CD8-positive, alpha-beta T cell (primary cell): ENCODE measurements at regions of chr4 and their contacts with region 1.

Region 1: DNA sequence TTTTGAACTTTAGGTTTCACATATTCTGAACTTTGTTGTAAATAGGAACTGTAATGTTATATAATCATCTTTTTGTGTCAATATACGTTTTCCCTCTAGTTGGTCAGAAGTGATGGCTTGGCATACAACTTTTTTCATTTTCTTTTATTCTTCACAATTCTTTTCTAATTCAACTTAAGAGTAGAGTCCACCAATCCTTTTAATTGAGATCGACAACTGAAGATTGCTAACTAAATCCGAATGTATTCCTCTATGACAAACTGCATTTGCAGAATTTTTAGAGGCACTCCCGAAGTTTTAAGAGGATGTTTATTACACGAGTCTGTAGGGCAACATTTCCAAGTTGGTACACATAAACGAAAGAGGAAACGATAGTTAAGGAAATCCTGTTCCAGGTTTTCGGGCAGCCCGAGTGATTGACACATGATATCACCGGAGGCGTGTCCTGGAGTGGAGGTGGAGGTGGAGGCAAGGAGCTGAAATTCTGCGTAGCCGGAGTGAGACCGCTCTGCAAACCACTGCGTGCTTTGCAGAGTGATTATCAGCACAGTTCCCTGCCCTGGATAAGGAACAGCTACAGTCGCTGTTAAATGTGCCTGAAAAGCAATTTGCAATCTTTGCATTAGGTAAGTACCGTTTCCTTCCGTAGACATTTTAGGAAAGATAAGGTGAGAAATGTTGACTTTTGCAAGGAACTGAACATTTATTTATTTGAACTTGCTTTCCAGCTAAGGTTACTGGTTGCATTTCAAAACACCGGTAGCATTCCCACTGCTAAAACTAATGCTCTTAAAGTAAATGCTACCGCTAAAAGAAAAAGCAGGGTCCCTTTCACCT is at the start of gene SPRY1:
- DNase-seq: peak; percentile 40 to 88 (median 75)
- ATAC-seq: peak; percentile 58
- H3K4me3 ChIP-seq: peak within 1 kb of the TSS; percentile 54 to 66
- H3K4me3 Mint-ChIP-seq: peak within 1 kb of the TSS; percentile 83
- H3K27ac ChIP-seq: peak within 1 kb of the TSS; percentile 21 to 24
- H3K27ac Mint-ChIP-seq: peak within 1 kb of the TSS; percentile 85
- H3K4me1 ChIP-seq: peaks cover 9% of the 10 kb centered on the region
- H3K4me1 Mint-ChIP-seq: peaks cover 24% of the 10 kb centered on the region
- H3K27me3 ChIP-seq: peaks cover 0 to 3% of the 10 kb centered on the region in 2 experiments
- H3K27me3 Mint-ChIP-seq: no peaks in the 10 kb centered on the region
- CTCF ChIP-seq: no peak
- total RNA-seq, gene SPRY1: 65.8 to 66.1 TPM

Region 2: DNA sequence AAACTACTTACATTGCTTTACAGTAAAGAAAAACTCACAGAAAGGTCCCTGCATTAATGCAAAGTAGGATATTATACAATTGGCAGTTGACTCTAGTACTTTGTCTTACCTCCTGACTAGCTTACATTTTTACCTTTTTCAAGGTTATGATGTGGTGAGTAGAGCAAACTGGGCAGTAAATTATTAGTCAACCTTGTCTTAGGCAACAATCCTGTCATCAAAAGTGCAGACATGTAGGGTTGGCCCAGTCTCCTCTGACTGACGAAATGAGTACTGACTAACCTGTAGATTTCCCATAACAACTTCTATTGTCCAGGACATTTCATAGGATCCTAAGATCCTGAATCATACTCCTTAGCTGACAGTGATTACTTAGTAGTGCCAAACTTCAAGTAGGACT is 332.1 kb before region 1 on chr4:
- CTCF ChIA-PET with region 1: no interaction called
- POLR2A ChIA-PET with region 1: no interaction called
- intact Hi-C with region 1: no loop called
- DNase-seq: no peak
- ATAC-seq: no peak
- H3K4me3 ChIP-seq: no peak overlapping the region
- H3K4me3 Mint-ChIP-seq: no peak overlapping the region
- H3K27ac ChIP-seq: no peak overlapping the region
- H3K27ac Mint-ChIP-seq: no peak overlapping the region
- H3K4me1 ChIP-seq: no peaks in the 10 kb centered on the region
- H3K4me1 Mint-ChIP-seq: no peaks in the 10 kb centered on the region
- H3K27me3 ChIP-seq: no peaks in the 10 kb centered on the region
- H3K27me3 Mint-ChIP-seq: no peaks in the 10 kb centered on the region
- CTCF ChIP-seq: no peak

Region 3: DNA sequence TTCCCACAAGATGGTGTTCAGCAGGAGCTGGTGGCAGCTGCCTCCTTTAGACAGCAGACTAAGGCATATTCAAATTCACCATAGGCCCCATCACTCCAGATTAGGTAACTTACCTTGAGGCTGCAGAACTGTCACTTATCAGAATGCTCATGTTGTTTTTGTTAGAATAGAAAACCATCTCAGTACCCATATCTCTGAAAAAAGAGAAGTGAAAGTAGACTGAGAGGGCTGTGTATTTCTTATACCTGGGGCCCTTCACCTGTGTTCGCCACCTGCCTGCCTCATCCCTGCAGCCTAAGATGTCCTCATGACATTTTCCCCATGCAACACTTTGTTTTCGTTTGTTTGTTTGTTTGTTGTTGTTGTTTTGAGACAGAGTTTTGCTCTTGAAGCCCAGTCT is 32.8 kb before region 1 on chr4:
- CTCF ChIA-PET with region 1: no interaction called
- POLR2A ChIA-PET with region 1: no interaction called
- intact Hi-C with region 1: no loop called
- DNase-seq: no peak
- ATAC-seq: no peak
- H3K4me3 ChIP-seq: no peak overlapping the region
- H3K4me3 Mint-ChIP-seq: no peak overlapping the region
- H3K27ac ChIP-seq: no peak overlapping the region
- H3K27ac Mint-ChIP-seq: no peak overlapping the region
- H3K4me1 ChIP-seq: no peaks in the 10 kb centered on the region
- H3K4me1 Mint-ChIP-seq: no peaks in the 10 kb centered on the region
- H3K27me3 ChIP-seq: no peaks in the 10 kb centered on the region
- H3K27me3 Mint-ChIP-seq: peaks cover 3% of the 10 kb centered on the region
- CTCF ChIP-seq: no peak

Region 4: GRCh38 chr4:123415977-123416376 is 19.5 kb after region 1 on chr4:
- CTCF ChIA-PET with region 1: interaction called, 3 read pairs
- POLR2A ChIA-PET with region 1: interaction called, 3 read pairs
- intact Hi-C with region 1: loop called (anchors 2 kb)
- DNase-seq: peak in 5 of 9 experiments; percentile 29 to 58 (median 53)
- ATAC-seq: peak; percentile 83
- H3K4me3 ChIP-seq: no peak overlapping the region
- H3K4me3 Mint-ChIP-seq: no peak overlapping the region
- H3K27ac ChIP-seq: no peak overlapping the region
- H3K27ac Mint-ChIP-seq: peak overlapping the region; percentile 7
- H3K4me1 ChIP-seq: no peaks in the 10 kb centered on the region
- H3K4me1 Mint-ChIP-seq: peaks cover 53% of the 10 kb centered on the region
- H3K27me3 ChIP-seq: no peaks in the 10 kb centered on the region
- H3K27me3 Mint-ChIP-seq: no peaks in the 10 kb centered on the region
- CTCF ChIP-seq: no peak

Region 5: DNA sequence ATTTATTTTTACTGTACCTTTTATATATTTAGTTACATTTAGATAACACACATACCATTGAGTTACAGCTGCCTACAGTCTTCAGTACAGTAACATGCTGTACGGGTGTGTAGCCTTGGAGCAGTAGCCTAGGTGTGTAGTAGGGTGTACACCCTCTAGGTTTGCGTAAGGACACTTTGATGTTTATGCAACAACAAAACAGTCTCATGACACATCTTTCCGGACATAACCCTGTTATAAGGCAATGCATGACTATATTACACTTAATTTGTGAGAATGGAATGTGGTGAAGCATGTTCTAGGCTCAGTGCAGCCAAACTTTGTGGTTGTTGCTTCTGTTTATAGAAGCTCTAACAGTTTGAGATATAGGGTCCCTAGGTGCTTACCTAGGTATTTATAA is 65.5 kb after region 1 on chr4:
- CTCF ChIA-PET with region 1: no interaction called
- POLR2A ChIA-PET with region 1: no interaction called
- intact Hi-C with region 1: loop called in 1 of 2 experiments (anchors 5 kb)
- DNase-seq: no peak
- ATAC-seq: no peak
- H3K4me3 ChIP-seq: no peak overlapping the region
- H3K4me3 Mint-ChIP-seq: no peak overlapping the region
- H3K27ac ChIP-seq: no peak overlapping the region
- H3K27ac Mint-ChIP-seq: no peak overlapping the region
- H3K4me1 ChIP-seq: no peaks in the 10 kb centered on the region
- H3K4me1 Mint-ChIP-seq: no peaks in the 10 kb centered on the region
- H3K27me3 ChIP-seq: no peaks in the 10 kb centered on the region
- H3K27me3 Mint-ChIP-seq: no peaks in the 10 kb centered on the region
- CTCF ChIP-seq: no peak

Region 6: DNA sequence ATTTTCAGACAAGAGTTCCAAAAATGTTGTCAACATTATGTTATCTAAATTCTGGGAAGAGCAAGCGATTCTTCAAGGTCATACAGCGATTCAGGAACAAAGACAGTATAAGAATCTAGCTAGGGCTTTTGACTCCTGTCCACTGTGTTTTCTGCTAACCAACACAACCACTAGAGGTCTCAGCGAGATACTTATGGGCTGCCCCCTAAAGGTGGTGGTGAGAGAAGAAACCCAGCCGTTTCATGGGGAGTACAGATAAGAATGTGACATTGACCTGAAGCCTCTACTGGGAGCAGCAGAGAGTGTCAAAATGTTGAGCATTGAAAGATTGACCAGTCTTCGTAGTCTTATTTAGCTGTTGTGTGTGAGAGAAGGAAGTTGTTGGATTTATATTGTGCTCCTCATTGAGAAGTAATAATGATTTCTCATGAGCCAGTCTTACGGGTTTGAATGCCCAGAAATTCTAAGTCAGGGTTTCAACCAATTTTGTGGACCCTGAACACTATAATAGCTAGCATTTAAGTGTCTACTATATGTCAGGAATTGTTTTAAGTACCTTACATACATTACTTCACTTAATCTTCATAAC is 168.3 kb after region 1 on chr4:
- CTCF ChIA-PET with region 1: interaction called, 8 read pairs
- POLR2A ChIA-PET with region 1: interaction called, 3 read pairs
- intact Hi-C with region 1: loop called (anchors 1 to 5 kb)
- DNase-seq: peak; percentile 15 to 81 (median 52)
- ATAC-seq: peak; percentile 98
- H3K4me3 ChIP-seq: no peak overlapping the region
- H3K4me3 Mint-ChIP-seq: no peak overlapping the region
- H3K27ac ChIP-seq: no peak overlapping the region
- H3K27ac Mint-ChIP-seq: no peak overlapping the region
- H3K4me1 ChIP-seq: no peaks in the 10 kb centered on the region
- H3K4me1 Mint-ChIP-seq: peaks cover 3% of the 10 kb centered on the region
- H3K27me3 ChIP-seq: no peaks in the 10 kb centered on the region
- H3K27me3 Mint-ChIP-seq: peaks cover 2% of the 10 kb centered on the region
- CTCF ChIP-seq: peak; percentile 95

Region 7: GRCh38 chr4:123661080-123661737 is 264.7 kb after region 1 on chr4:
- CTCF ChIA-PET with region 1: interaction called, 25 read pairs
- POLR2A ChIA-PET with region 1: interaction called, 3 read pairs
- intact Hi-C with region 1: loop called in 1 of 2 experiments (anchors 1 kb)
- DNase-seq: peak in 2 of 9 experiments; percentile 20 to 40
- ATAC-seq: no peak
- H3K4me3 ChIP-seq: no peak overlapping the region
- H3K4me3 Mint-ChIP-seq: no peak overlapping the region
- H3K27ac ChIP-seq: no peak overlapping the region
- H3K27ac Mint-ChIP-seq: no peak overlapping the region
- H3K4me1 ChIP-seq: no peaks in the 10 kb centered on the region
- H3K4me1 Mint-ChIP-seq: no peaks in the 10 kb centered on the region
- H3K27me3 ChIP-seq: no peaks in the 10 kb centered on the region
- H3K27me3 Mint-ChIP-seq: no peaks in the 10 kb centered on the region
- CTCF ChIP-seq: peak; percentile 57

Region 8: DNA sequence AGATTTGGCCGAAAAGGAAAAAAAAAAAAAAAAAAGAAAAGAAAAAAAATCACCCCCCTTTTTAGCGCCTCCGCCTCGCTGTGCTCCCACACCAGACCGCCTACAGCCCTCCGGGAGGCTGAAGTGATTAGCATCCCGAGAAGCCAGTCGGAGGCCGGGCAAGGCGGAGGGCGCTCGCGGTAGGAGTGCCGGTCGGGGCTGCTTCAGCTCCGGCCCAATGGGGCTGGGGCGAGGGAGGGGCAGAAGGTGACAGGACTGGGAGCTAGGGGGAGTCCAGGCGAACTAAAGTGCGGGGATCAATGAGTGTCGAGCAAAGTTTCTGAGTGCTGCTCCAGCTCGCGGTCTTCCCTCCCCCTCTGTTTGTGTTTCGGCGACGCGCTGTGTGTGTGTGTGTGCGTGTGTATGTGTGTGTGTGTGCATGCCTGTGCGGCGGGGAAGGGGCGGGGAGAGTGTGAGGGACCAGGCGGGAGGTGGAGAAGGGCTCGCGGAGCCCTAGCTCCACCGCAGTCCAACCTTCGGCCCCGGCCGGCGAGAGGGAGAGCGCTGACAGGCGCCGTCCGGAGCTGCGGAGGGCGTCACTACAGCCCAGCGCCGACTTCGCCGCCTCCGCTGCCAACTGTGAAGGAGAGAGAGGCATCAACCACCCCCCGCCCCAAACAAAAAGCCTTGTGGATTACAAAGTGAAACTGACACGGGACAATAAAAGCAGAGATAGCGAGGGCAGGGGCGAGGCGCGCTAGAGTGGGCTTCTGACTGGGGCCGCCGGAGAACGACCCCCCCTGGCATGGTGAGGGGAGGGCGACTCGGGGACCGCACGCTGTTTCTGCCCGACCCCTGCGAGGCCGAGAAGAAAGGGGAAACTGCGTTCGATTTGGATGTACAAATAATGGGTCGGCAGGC is 1918.4 kb after region 1 on chr4 and contains the start of gene FAT4:
- CTCF ChIA-PET with region 1: no interaction called
- POLR2A ChIA-PET with region 1: no interaction called
- intact Hi-C with region 1: no loop called
- DNase-seq: peak in 7 of 9 experiments; percentile 17 to 60 (median 42)
- ATAC-seq: peak; percentile 61
- H3K4me3 ChIP-seq: peak within 1 kb of the TSS; percentile 50 to 58
- H3K4me3 Mint-ChIP-seq: peak within 1 kb of the TSS; percentile 80
- H3K27ac ChIP-seq: no peak within 1 kb of the TSS
- H3K27ac Mint-ChIP-seq: no peak within 1 kb of the TSS
- H3K4me1 ChIP-seq: peaks cover 27% of the 10 kb centered on the region
- H3K4me1 Mint-ChIP-seq: peaks cover 37% of the 10 kb centered on the region
- H3K27me3 ChIP-seq: peaks cover 18 to 30% of the 10 kb centered on the region in 2 experiments
- H3K27me3 Mint-ChIP-seq: peaks cover 66% of the 10 kb centered on the region
- CTCF ChIP-seq: no peak
- total RNA-seq, gene FAT4: not detected